MCF 10A (cell line): ENCODE measurements at regions of chr9 and their contacts with region 1.

Region 1: DNA sequence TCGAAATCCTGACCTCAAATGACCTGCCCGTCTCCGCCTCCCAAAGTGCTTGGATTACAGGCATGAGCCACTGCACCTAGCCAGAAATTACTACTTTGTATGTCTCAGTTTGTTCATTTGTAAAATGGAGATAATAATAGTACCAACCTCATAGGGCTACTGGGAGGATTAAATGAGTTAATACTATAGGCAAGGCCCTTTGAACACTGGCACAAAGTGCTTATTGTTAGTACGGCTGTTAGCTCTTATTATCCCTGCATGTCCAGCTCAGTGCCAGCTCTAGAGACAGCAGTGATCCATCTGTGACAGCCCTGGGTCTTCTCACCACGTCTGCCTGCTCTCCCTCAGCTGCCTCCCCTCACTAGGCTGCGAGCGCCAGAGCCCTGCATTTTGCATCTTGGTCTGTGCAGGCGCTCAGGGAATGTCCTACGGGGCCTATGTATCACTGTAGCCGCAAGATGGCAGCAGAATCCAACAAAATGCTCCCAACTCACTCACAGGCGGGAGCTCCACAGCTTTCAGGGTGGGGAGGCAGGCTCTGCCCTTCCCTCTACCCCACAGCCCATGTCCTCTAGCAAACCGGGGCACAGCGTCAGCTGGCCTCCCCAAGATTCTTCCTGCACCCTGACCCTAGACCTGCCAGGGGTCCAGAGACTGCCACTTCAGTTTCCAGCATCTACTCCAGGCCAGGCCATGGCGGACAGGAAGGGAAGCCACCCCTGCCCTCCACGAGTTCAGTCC is 17.7 kb upstream of the AKNA start:
- DNase-seq: peak; percentile 84
- H3K4me3 Mint-ChIP-seq: no peak overlapping the region
- H3K27ac Mint-ChIP-seq: no peak overlapping the region
- H3K4me1 Mint-ChIP-seq: peaks cover 11% of the 10 kb centered on the region
- H3K27me3 Mint-ChIP-seq: no peaks in the 10 kb centered on the region
- CTCF ChIP-seq: peak; percentile 83

Region 2: GRCh38 chr9:114385412-114386181 is 19.9 kb before region 1 on chr9:
- CTCF ChIA-PET with region 1: interaction called, 18 read pairs
- POLR2A ChIA-PET with region 1: interaction called, 4 read pairs
- intact Hi-C with region 1: no loop called
- DNase-seq: peak; percentile 98
- H3K4me3 Mint-ChIP-seq: no peak overlapping the region
- H3K27ac Mint-ChIP-seq: peak overlapping the region; percentile 93
- H3K4me1 Mint-ChIP-seq: peaks cover 24% of the 10 kb centered on the region
- H3K27me3 Mint-ChIP-seq: no peaks in the 10 kb centered on the region
- CTCF ChIP-seq: no peak

Region 3: GRCh38 chr9:114434878-114435311 is 29.4 kb after region 1 on chr9:
- CTCF ChIA-PET with region 1: interaction called, 27 read pairs
- POLR2A ChIA-PET with region 1: interaction called, 3 read pairs
- intact Hi-C with region 1: no loop called
- DNase-seq: peak; percentile 61
- H3K4me3 Mint-ChIP-seq: no peak overlapping the region
- H3K27ac Mint-ChIP-seq: no peak overlapping the region
- H3K4me1 Mint-ChIP-seq: no peaks in the 10 kb centered on the region
- H3K27me3 Mint-ChIP-seq: no peaks in the 10 kb centered on the region
- CTCF ChIP-seq: peak; percentile 79

Region 4: DNA sequence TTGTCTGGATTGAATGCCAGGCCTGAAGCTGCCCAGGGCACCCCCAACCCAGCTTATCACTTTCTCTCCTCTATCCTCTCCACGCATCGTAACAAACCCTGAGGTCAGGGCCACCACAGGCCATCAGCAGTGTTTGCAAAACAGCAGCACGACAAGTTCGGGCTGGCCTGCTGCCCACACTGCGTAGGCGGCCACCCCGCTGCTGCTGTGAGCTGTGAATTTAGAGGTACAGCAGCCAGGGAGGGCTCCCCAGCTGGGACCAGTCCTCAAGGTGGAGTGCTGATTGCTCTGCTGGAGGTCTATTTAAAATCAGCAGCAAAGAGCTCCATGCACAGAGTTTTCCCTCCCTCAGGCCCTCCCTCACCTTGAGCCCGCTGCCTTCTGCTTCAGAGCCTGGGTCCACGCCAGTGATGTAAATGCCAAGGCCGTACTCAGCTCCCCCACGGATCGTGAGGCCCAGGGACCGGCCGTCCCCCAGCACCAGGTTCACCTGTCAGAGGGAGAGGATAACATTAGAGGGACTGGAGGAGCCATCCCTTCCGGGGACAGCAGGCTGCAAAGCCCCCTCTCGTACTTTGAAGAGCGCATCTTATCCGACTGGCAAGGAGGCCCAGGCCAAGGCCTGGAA is 60.6 kb after region 1 on chr9:
- CTCF ChIA-PET with region 1: no interaction called
- POLR2A ChIA-PET with region 1: no interaction called
- intact Hi-C with region 1: no loop called
- DNase-seq: no peak
- H3K4me3 Mint-ChIP-seq: no peak overlapping the region
- H3K27ac Mint-ChIP-seq: no peak overlapping the region
- H3K4me1 Mint-ChIP-seq: peaks cover 9% of the 10 kb centered on the region
- H3K27me3 Mint-ChIP-seq: no peaks in the 10 kb centered on the region
- CTCF ChIP-seq: no peak

Region 5: GRCh38 chr9:114662081-114662989 is 256.9 kb after region 1 on chr9:
- CTCF ChIA-PET with region 1: interaction called, 27 read pairs
- POLR2A ChIA-PET with region 1: no interaction called
- intact Hi-C with region 1: no loop called
- DNase-seq: peak; percentile 64
- H3K4me3 Mint-ChIP-seq: no peak overlapping the region
- H3K27ac Mint-ChIP-seq: no peak overlapping the region
- H3K4me1 Mint-ChIP-seq: peaks cover 8% of the 10 kb centered on the region
- H3K27me3 Mint-ChIP-seq: no peaks in the 10 kb centered on the region
- CTCF ChIP-seq: peak; percentile 88

Region 6: DNA sequence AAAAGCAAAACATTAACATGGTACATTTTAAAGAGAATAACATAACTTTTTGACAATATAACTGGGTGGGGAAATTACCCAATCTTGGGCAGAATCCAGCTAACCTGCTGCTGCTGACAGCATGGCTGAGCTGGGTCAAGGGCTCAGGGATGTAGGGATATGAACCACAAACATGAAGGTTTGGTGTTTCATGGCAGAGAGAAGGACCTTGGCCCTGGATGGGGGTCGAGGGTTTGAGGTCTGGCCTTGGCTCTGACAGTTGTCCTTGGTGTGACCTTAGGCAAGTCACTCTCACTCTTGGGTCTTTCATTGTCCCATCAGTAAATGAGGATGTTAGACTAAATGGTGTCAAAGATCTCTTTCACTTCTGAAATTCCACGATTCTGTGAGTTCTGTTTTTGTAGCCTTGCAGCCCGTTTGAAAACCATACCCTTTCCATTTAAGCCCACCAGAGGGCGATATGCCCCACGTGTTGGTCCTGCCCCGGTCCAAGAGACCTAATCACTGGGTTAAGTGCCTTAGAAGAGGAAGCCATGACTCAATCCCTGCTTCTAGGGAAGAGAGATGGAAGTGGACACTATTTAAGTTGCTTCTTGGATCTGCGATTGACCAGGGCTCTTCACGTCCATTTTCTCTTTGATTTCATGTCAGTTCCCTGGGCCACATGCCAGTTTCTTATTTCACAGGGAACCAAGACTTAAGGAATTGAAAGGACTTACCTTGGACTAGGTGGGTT is 333.3 kb after region 1 on chr9:
- CTCF ChIA-PET with region 1: interaction called, 6 read pairs
- POLR2A ChIA-PET with region 1: interaction called, 3 read pairs
- intact Hi-C with region 1: loop called (anchors 2 kb)
- DNase-seq: peak; percentile 87
- H3K4me3 Mint-ChIP-seq: no peak overlapping the region
- H3K27ac Mint-ChIP-seq: no peak overlapping the region
- H3K4me1 Mint-ChIP-seq: peaks cover 23% of the 10 kb centered on the region
- H3K27me3 Mint-ChIP-seq: no peaks in the 10 kb centered on the region
- CTCF ChIP-seq: peak; percentile 85

Region 7: GRCh38 chr9:114820776-114821501 is 415.5 kb after region 1 on chr9:
- CTCF ChIA-PET with region 1: no interaction called
- POLR2A ChIA-PET with region 1: no interaction called
- intact Hi-C with region 1: no loop called
- DNase-seq: no peak
- H3K4me3 Mint-ChIP-seq: no peak overlapping the region
- H3K27ac Mint-ChIP-seq: no peak overlapping the region
- H3K4me1 Mint-ChIP-seq: no peaks in the 10 kb centered on the region
- H3K27me3 Mint-ChIP-seq: no peaks in the 10 kb centered on the region
- CTCF ChIP-seq: no peak

Region 8: DNA sequence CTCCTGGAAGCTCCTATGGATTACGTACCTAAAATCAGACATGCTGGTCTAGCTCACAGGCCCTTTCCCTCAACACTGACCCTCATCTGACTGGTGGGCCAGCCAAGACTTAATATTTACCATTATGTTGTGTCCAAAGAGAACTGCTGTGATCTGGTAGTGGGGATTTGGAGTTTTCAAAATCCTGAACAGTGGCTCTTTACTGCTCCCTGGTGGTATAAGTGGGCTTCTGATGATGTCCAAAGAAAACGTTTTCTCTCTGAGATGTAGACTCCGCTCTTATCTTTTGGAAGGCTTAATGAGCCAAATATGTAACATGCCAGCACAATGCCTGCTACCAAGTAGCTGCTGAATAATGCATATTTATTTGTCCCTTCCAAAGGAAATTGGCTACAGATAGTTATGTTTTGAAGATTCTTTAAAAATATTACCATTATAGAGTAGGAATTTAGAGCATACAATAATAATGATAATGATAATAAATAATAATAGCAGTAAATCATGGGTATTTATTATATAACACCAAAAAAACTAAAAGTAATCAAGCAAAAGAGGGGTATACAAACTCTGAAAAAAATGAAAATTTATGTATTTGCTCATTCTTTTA is 1119.1 kb after region 1 on chr9:
- CTCF ChIA-PET with region 1: no interaction called
- POLR2A ChIA-PET with region 1: no interaction called
- intact Hi-C with region 1: loop called (anchors 5 kb)
- DNase-seq: peak; percentile 73
- H3K4me3 Mint-ChIP-seq: no peak overlapping the region
- H3K27ac Mint-ChIP-seq: no peak overlapping the region
- H3K4me1 Mint-ChIP-seq: no peaks in the 10 kb centered on the region
- H3K27me3 Mint-ChIP-seq: no peaks in the 10 kb centered on the region
- CTCF ChIP-seq: peak; percentile 67